CD4-positive, alpha-beta memory T cell (primary cell): ENCODE measurements at regions of chr19 and their contacts with region 1.

Region 1: GRCh38 chr19:40716655-40717324 is at the starts of genes COQ8B and ITPKC:
- DNase-seq: peak; percentile 98 to 100 (median 99)
- H3K4me3 ChIP-seq: peak within 1 kb of the TSS; percentile 78 to 83
- H3K4me3 Mint-ChIP-seq: peak within 1 kb of the TSS; percentile 87 to 97 (median 92)
- H3K27ac ChIP-seq: peak within 1 kb of the TSS; percentile 98
- H3K27ac Mint-ChIP-seq: peak within 1 kb of the TSS; percentile 96 to 99 (median 98)
- H3K4me1 ChIP-seq: peaks cover 70% of the 10 kb centered on the region
- H3K4me1 Mint-ChIP-seq: peaks cover 40 to 83% (median 58%) of the 10 kb centered on the region in 4 donors
- H3K27me3 ChIP-seq: no peaks in the 10 kb centered on the region
- H3K27me3 Mint-ChIP-seq: no peaks in the 10 kb centered on the region
- total RNA-seq, gene COQ8B: 48.0 to 54.7 TPM
- total RNA-seq, gene ITPKC: 8.1 to 10.2 TPM

Region 2: DNA sequence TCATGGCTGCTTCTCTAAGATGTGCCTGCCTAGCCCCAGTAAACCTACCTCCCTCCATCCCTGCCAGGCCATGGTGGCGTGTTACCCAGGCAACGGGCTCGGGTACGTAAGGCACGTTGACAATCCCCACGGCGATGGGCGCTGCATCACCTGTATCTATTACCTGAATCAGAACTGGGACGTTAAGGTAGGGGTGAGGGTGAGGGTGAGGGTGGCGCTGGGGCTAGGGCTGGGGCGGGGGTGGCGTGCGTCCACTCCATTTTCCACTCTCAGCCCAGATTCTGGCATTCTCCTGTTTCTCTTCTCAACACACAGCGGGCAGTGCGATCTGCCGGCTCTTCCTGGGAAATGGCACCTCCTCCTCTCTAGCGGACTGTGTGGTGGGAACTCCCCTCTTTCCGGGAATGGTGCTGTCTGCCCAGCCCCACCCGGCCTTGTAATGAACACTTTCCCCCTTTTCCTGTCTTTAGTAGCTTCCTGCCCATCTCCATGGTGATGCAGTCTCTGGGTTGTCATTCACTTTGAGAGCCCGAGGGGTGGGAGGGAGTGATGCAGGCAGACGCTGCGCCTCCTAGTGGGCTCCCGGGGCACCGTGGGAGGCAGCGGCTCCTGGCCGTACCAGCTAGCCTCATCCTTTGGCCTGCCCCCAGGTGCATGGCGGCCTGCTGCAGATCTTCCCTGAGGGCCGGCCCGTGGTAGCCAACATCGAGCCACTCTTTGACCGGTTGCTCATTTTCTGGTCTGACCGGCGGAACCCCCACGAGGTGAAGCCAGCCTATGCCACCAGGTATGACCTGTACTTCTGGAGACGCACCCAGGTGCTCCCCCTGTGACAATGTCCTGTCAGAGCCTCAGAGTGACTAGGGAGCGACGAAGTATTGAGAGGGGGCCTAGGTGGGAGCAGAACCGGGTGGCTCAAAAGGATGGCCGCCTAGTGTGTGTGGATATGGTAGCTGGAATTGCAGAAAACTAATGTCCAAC is 90.0 kb after region 1 on chr19:
- CTCF ChIA-PET with region 1: interaction called, 10 read pairs
- POLR2A ChIA-PET with region 1: interaction called, 12 read pairs
- intact Hi-C with region 1: no loop called
- DNase-seq: peak; percentile 82 to 92 (median 83)
- H3K4me3 ChIP-seq: peak overlapping the region in 1 of 2 donors; percentile 23
- H3K4me3 Mint-ChIP-seq: peak overlapping the region; percentile 80 to 90 (median 88)
- H3K27ac ChIP-seq: peak overlapping the region; percentile 84
- H3K27ac Mint-ChIP-seq: peak overlapping the region; percentile 91 to 100 (median 99)
- H3K4me1 ChIP-seq: peaks cover 97% of the 10 kb centered on the region
- H3K4me1 Mint-ChIP-seq: peaks cover 63 to 96% (median 78%) of the 10 kb centered on the region in 4 donors
- H3K27me3 ChIP-seq: no peaks in the 10 kb centered on the region
- H3K27me3 Mint-ChIP-seq: no peaks in the 10 kb centered on the region